Panc1 (cell line): ENCODE measurements at regions of chr3 and their contacts with region 1.

Region 1: DNA sequence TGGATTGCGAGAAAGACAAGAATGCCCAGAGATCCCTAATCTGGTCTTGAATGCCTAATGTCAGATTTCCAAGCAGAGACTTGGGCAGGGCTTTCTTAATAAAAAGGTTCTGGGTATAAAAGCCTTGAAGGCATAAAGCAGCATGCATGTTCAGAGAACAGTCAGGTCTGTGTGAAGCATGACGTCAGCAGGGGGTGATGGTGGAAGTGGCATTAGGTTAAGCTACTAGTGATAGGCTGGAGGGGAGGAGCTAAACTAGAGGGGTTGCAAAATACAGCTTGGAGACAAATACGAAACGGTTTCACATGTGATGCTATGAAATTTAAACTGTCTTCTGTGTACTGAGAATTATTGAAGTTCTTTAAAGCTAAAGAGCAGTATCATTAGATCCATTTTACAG is 125.6 kb downstream of the VPS8 start:
- DNase-seq: no peak
- ATAC-seq: no peak
- H3K4me3 ChIP-seq: no peak overlapping the region
- H3K27ac ChIP-seq: no peak overlapping the region
- H3K4me1 ChIP-seq: no peaks in the 10 kb centered on the region
- H3K27me3 ChIP-seq: no peaks in the 10 kb centered on the region
- CTCF ChIP-seq: no peak

Region 2: GRCh38 chr3:184874709-184875644 is 62.6 kb before region 1 on chr3:
- CTCF ChIA-PET with region 1: no interaction called
- POLR2A ChIA-PET with region 1: no interaction called
- in situ Hi-C with region 1: no loop called
- intact Hi-C with region 1: no loop called
- DNase-seq: peak; percentile 25
- ATAC-seq: no peak; the same call in 1 of the 2 replicates
- H3K4me3 ChIP-seq: no peak overlapping the region
- H3K27ac ChIP-seq: no peak overlapping the region
- H3K4me1 ChIP-seq: no peaks in the 10 kb centered on the region
- H3K27me3 ChIP-seq: no peaks in the 10 kb centered on the region
- CTCF ChIP-seq: peak; percentile 73; the same call in 1 of the 2 replicates

Region 3: GRCh38 chr3:185114756-185115155 is 177.1 kb after region 1 on chr3:
- CTCF ChIA-PET with region 1: no interaction called
- POLR2A ChIA-PET with region 1: no interaction called
- in situ Hi-C with region 1: no loop called
- intact Hi-C with region 1: no loop called
- DNase-seq: no peak
- ATAC-seq: no peak
- H3K4me3 ChIP-seq: no peak overlapping the region
- H3K27ac ChIP-seq: no peak overlapping the region
- H3K4me1 ChIP-seq: no peaks in the 10 kb centered on the region
- H3K27me3 ChIP-seq: peaks cover 38% of the 10 kb centered on the region
- CTCF ChIP-seq: no peak

Region 4: GRCh38 chr3:185236969-185237368 is 299.4 kb after region 1 on chr3:
- CTCF ChIA-PET with region 1: no interaction called
- POLR2A ChIA-PET with region 1: interaction called, 11 read pairs
- in situ Hi-C with region 1: no loop called
- intact Hi-C with region 1: no loop called
- DNase-seq: no peak
- ATAC-seq: no peak
- H3K4me3 ChIP-seq: no peak overlapping the region
- H3K27ac ChIP-seq: no peak overlapping the region
- H3K4me1 ChIP-seq: no peaks in the 10 kb centered on the region
- H3K27me3 ChIP-seq: no peaks in the 10 kb centered on the region
- CTCF ChIP-seq: no peak